Calu3 (cell line): ENCODE measurements at regions of chr15 and their contacts with region 1.

Region 1: GRCh38 chr15:75684642-75685041 is 28.0 kb downstream of the CSPG4 start:
- DNase-seq: no peak
- H3K4me3 Mint-ChIP-seq: no peak overlapping the region
- H3K27ac Mint-ChIP-seq: no peak overlapping the region
- H3K4me1 Mint-ChIP-seq: no peaks in the 10 kb centered on the region
- H3K27me3 Mint-ChIP-seq: no peaks in the 10 kb centered on the region
- CTCF ChIP-seq: no peak

Region 2: GRCh38 chr15:75508840-75509532 is 175.7 kb before region 1 on chr15:
- CTCF ChIA-PET with region 1: interaction called, 5 read pairs
- intact Hi-C with region 1: loop called (anchors 2 kb)
- DNase-seq: peak; percentile 39
- H3K4me3 Mint-ChIP-seq: no peak overlapping the region
- H3K27ac Mint-ChIP-seq: no peak overlapping the region
- H3K4me1 Mint-ChIP-seq: no peaks in the 10 kb centered on the region
- H3K27me3 Mint-ChIP-seq: no peaks in the 10 kb centered on the region
- CTCF ChIP-seq: peak; percentile 49

Region 3: DNA sequence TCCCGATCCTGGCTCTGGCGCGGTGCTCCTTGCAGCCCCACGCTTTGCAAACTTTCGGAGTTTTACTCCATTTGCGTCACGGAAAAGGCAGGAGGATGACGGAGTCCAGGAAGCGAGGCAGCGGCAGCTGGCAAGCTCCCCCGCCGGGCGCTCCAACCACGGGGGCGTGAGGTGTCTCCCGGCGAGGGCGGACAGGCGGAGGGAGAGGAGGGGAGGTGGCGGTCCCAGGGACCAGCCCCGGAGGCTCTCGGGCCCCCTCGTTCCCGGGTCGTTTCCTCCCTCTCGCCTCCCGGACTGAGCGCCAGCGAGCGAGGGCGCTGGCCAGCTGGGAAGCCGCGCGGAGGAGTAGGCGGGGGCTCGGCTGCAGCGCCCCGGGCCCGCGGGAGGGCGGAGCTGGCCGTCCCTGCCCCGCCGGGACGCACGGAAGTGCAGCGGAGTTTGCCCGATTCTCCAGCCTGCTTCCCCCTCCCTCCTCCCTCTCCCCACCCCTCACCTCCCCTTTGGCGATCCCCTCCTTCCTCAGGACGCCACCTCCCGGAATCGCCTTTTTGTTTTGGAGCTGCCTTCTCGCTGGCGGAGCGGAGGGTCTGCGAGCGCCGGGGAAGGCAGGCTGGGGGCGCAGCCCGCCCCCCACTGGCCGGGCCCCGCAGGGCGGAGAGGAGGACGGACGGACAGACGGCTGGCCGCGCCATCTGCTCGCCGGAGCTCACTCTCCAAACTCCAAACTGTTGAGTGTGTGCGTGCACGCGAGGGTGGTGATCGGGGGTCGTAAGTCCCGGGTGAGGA is 37.1 kb before region 1 on chr15 and contains the start of gene SNX33:
- CTCF ChIA-PET with region 1: no interaction called
- intact Hi-C with region 1: loop called (anchors 2 kb)
- DNase-seq: peak; percentile 85
- H3K4me3 Mint-ChIP-seq: peak within 1 kb of the TSS; percentile 82
- H3K27ac Mint-ChIP-seq: peak within 1 kb of the TSS; percentile 49
- H3K4me1 Mint-ChIP-seq: peaks cover 58% of the 10 kb centered on the region
- H3K27me3 Mint-ChIP-seq: no peaks in the 10 kb centered on the region
- CTCF ChIP-seq: peak; percentile 55
- total RNA-seq, gene SNX33: 23.2 and 24.1 TPM in 2 replicates

Region 4: GRCh38 chr15:75661091-75661777 is 23.4 kb before region 1 on chr15:
- CTCF ChIA-PET with region 1: no interaction called
- intact Hi-C with region 1: no loop called
- DNase-seq: peak; percentile 90
- H3K4me3 Mint-ChIP-seq: no peak overlapping the region
- H3K27ac Mint-ChIP-seq: peak overlapping the region; percentile 62
- H3K4me1 Mint-ChIP-seq: peaks cover 59% of the 10 kb centered on the region
- H3K27me3 Mint-ChIP-seq: no peaks in the 10 kb centered on the region
- CTCF ChIP-seq: no peak

Region 5: DNA sequence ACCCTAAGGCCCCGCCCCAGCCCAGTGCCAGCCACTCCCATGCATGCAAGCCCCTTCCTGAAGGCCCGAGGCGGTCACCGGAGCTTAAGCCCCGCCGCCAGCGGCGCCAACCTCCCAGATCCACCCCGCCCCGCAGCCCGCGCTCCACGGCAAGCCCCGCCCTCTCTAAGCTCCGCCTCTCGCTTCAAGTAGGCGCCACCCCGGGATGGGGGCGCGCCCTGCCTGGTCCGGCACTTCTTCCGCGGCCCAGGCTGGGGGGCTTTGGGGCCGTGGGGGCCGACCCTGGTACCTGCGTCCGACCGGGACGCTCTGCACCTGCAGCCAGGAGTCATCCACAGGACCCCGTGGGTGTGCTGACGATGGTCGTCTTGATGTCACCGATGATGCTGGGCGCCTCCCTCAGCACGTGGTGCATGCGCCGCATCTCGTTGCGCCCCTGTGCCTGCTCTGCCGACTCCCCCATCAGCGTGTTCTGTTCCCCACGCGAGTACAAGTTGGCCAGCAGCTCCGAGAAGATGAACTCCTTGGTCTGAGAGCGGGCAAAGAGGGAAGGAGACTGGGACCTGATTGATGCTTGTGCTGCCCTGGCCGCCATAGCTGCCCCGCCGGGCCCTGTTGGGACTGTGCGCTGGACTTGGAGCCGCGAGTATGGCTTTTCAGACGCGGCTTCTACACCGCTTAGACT is 54.1 kb after region 1 on chr15:
- CTCF ChIA-PET with region 1: interaction called, 12 read pairs
- intact Hi-C with region 1: no loop called
- DNase-seq: peak; percentile 97
- H3K4me3 Mint-ChIP-seq: peak overlapping the region; percentile 72
- H3K27ac Mint-ChIP-seq: no peak overlapping the region
- H3K4me1 Mint-ChIP-seq: no peaks in the 10 kb centered on the region
- H3K27me3 Mint-ChIP-seq: peaks cover 30% of the 10 kb centered on the region
- CTCF ChIP-seq: no peak

Region 6: GRCh38 chr15:75785771-75786574 is 101.3 kb after region 1 on chr15:
- CTCF ChIA-PET with region 1: no interaction called
- intact Hi-C with region 1: no loop called
- DNase-seq: no peak
- H3K4me3 Mint-ChIP-seq: no peak overlapping the region
- H3K27ac Mint-ChIP-seq: no peak overlapping the region
- H3K4me1 Mint-ChIP-seq: no peaks in the 10 kb centered on the region
- H3K27me3 Mint-ChIP-seq: peaks cover 88% of the 10 kb centered on the region
- CTCF ChIP-seq: no peak

Region 7: DNA sequence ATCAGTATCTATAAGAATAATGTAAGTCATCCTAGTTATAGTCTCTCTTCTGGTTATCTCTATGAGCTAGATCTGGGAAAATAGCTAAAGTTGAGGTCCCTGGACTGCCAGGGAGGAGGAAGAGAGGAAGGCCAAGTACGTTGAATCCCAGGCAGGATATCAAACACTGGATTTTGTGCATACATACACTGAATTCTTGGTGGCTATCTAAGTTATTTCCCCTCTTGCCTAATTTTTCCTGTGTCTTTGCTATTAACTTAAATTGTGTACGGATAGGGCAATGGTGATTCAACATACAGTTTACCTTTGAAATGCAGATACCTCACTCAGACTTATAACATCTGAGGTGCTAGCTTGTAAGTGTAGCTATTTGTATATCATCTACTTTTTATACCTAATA is 246.2 kb after region 1 on chr15:
- CTCF ChIA-PET with region 1: no interaction called
- intact Hi-C with region 1: no loop called
- DNase-seq: no peak
- H3K4me3 Mint-ChIP-seq: no peak overlapping the region
- H3K27ac Mint-ChIP-seq: no peak overlapping the region
- H3K4me1 Mint-ChIP-seq: no peaks in the 10 kb centered on the region
- H3K27me3 Mint-ChIP-seq: no peaks in the 10 kb centered on the region
- CTCF ChIP-seq: no peak